Dendritic cell treated with granulocyte-macrophage colony-stimulating factor and Interleukin-4, amounts not matched to agents 40 ng/mL and 50 ng/mL, for 4 days (primary cell): ENCODE measurements at regions of chr16 and their contacts with region 1.

Region 1: GRCh38 chr16:73047518-73048291 is at the start of gene ZFHX3:
- H3K4me3 Mint-ChIP-seq: peak within 1 kb of the TSS; percentile 80
- H3K27ac Mint-ChIP-seq: peak within 1 kb of the TSS; percentile 78
- H3K4me1 Mint-ChIP-seq: peaks cover 57% of the 10 kb centered on the region
- H3K27me3 Mint-ChIP-seq: no peaks in the 10 kb centered on the region

Region 2: DNA sequence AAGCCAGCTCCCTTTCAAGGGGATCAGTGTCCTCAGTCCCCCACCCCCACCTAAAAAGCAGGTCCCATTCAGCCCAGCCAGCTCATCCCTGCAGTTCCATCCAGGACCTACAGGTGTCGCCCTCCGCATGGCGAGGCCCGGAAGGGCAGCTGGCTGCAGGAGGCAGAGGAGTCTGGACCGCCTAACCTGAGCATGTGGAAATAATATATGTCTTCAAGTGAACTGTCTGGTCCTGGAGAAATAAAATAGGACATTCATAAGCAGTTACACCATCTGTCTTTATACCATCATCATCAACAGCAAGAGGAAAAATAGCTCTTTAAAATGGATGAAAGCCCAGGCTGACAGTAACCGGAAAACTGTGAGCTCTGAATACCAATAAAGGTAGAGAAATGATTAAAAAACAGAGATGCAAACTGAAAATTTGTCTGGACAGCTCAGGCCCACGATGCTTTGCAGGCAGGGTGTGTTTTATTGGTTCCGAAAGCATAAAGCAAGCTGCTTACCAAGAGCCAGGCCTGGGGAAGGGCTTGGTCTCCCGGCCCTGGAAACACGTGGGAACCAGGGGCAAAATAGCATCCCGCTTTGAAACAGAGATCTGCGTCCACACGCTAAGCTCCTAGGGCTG is 215.0 kb before region 1 on chr16:
- intact Hi-C with region 1: loop called (anchors 5 kb)
- H3K4me3 Mint-ChIP-seq: no peak overlapping the region
- H3K27ac Mint-ChIP-seq: no peak overlapping the region
- H3K4me1 Mint-ChIP-seq: no peaks in the 10 kb centered on the region
- H3K27me3 Mint-ChIP-seq: no peaks in the 10 kb centered on the region

Region 3: DNA sequence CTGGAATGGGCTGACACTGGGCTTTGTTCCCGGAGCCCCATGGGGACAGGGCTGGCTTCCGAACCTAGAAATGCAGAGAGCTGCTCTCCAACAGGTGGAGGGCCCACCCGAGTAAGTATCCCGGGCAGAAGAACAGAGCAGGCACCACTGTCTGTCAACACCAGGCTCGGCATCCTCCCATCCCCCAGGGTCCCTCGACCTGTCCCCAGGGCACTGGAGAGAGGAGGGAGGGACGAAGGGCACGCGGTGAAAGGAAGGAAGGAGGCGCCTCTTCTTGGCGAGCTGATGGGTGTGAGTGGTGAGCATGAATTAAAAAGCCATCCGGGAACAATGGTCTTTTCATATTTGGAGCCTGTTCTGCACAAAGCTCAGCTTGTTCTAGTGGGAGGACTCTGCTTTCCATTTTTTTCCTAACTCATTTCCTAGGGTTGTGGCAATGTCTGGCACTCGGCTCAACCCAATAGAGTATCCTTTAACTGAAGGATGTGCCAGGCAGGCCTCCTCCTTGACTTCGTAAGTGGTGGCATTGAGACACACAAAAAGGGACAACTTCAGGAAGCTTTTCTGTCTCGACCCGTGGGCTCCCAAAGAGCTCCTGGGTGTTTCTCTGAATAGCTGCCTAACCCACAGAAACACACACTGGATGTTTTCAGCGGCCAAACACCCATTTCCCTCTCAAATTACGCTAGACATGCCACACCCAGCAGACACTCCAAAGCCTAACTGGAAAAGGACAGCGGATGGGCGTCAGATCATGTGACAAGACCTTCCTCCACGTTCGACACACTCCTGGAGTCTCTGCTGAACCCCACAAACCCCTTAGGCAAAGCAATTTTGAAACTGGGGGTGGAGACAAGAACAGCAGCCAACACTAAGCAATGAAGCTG is 47.4 kb before region 1 on chr16:
- intact Hi-C with region 1: no loop called
- H3K4me3 Mint-ChIP-seq: peak overlapping the region; percentile 11
- H3K27ac Mint-ChIP-seq: no peak overlapping the region
- H3K4me1 Mint-ChIP-seq: peaks cover 47% of the 10 kb centered on the region
- H3K27me3 Mint-ChIP-seq: no peaks in the 10 kb centered on the region